CD4-positive, alpha-beta memory T cell (primary cell): ENCODE measurements at regions of chr6 and their contacts with region 1.

Region 1: GRCh38 chr6:111709615-111710398 is 104.1 kb upstream of the TRAF3IP2 start:
- DNase-seq: peak; percentile 74 to 79 (median 76)
- H3K4me3 ChIP-seq: no peak overlapping the region
- H3K4me3 Mint-ChIP-seq: peak overlapping the region; percentile 26 to 82 (median 44)
- H3K27ac ChIP-seq: peak overlapping the region; percentile 42
- H3K27ac Mint-ChIP-seq: peak overlapping the region; percentile 91 to 97 (median 95)
- H3K4me1 ChIP-seq: peaks cover 51% of the 10 kb centered on the region
- H3K4me1 Mint-ChIP-seq: peaks cover 40 to 60% (median 48%) of the 10 kb centered on the region in 4 donors
- H3K27me3 ChIP-seq: no peaks in the 10 kb centered on the region
- H3K27me3 Mint-ChIP-seq: no peaks in the 10 kb centered on the region

Region 2: GRCh38 chr6:111388681-111389080 is 321.1 kb before region 1 on chr6:
- CTCF ChIA-PET with region 1: no interaction called
- POLR2A ChIA-PET with region 1: no interaction called
- intact Hi-C with region 1: no loop called
- DNase-seq: no peak
- H3K4me3 ChIP-seq: no peak overlapping the region
- H3K4me3 Mint-ChIP-seq: no peak overlapping the region
- H3K27ac ChIP-seq: no peak overlapping the region
- H3K27ac Mint-ChIP-seq: peak overlapping the region in 2 of 7 donors; percentile 1 to 52
- H3K4me1 ChIP-seq: no peaks in the 10 kb centered on the region
- H3K4me1 Mint-ChIP-seq: no peaks in the 10 kb centered on the region
- H3K27me3 ChIP-seq: no peaks in the 10 kb centered on the region
- H3K27me3 Mint-ChIP-seq: no peaks in the 10 kb centered on the region

Region 3: GRCh38 chr6:111411978-111412566 is 297.7 kb before region 1 on chr6:
- CTCF ChIA-PET with region 1: no interaction called
- POLR2A ChIA-PET with region 1: no interaction called
- intact Hi-C with region 1: no loop called
- DNase-seq: no peak
- H3K4me3 ChIP-seq: no peak overlapping the region
- H3K4me3 Mint-ChIP-seq: no peak overlapping the region
- H3K27ac ChIP-seq: no peak overlapping the region
- H3K27ac Mint-ChIP-seq: no peak overlapping the region
- H3K4me1 ChIP-seq: no peaks in the 10 kb centered on the region
- H3K4me1 Mint-ChIP-seq: peaks cover 0 to 9% (median 5%) of the 10 kb centered on the region in 4 donors
- H3K27me3 ChIP-seq: no peaks in the 10 kb centered on the region
- H3K27me3 Mint-ChIP-seq: no peaks in the 10 kb centered on the region

Region 4: DNA sequence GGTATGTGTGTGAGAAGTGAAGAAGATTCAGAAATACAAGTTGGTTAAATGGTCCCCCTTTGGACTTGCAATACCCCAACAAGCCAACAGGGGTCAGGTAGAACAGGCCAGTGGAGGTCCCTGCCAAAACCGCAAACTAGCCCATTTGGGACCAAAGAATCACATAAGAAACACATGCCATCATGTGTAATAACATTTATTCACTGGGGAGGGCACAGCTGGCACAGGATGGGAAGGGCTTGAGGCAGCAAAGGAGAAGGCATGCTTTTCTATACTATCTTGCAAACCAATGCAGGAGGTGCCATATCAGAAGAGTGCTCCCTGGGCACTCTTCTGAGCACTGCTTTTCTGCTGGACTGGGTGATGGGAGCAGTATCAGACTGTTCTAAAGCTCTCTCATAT is 11.9 kb after region 1 on chr6:
- CTCF ChIA-PET with region 1: interaction called, 12 read pairs
- POLR2A ChIA-PET with region 1: interaction called, 3 read pairs
- intact Hi-C with region 1: loop called (anchors 2 kb)
- DNase-seq: peak; percentile 46 to 57 (median 50)
- H3K4me3 ChIP-seq: no peak overlapping the region
- H3K4me3 Mint-ChIP-seq: peak overlapping the region in 3 of 8 donors; percentile 17 to 81 (median 39)
- H3K27ac ChIP-seq: no peak overlapping the region
- H3K27ac Mint-ChIP-seq: peak overlapping the region; percentile 77 to 92 (median 88)
- H3K4me1 ChIP-seq: peaks cover 76% of the 10 kb centered on the region
- H3K4me1 Mint-ChIP-seq: peaks cover 61 to 84% (median 75%) of the 10 kb centered on the region in 4 donors
- H3K27me3 ChIP-seq: no peaks in the 10 kb centered on the region
- H3K27me3 Mint-ChIP-seq: no peaks in the 10 kb centered on the region

Region 5: DNA sequence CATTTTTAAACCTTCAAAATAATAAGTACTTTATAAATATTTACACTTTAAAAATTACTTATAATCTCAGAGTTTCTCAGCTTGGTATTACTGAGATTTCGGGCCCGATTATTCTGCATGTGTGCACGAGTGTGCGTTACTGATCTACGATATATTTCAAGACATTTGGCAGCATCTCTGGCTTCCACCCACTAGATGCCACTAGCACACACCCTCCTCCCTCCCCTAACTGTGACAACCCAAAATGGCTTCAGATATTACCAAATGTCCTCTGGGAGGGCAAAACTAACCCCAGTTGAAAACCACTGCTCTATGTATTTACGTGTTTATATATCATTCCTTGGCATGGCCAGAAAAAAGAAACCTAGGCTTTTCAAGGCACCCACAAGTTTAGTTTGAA is 67.5 kb after region 1 on chr6:
- CTCF ChIA-PET with region 1: interaction called, 11 read pairs
- POLR2A ChIA-PET with region 1: interaction called, 4 read pairs
- intact Hi-C with region 1: loop called (anchors 2 kb)
- DNase-seq: peak in 3 of 5 donors; percentile 46 to 50 (median 48)
- H3K4me3 ChIP-seq: no peak overlapping the region
- H3K4me3 Mint-ChIP-seq: peak overlapping the region; percentile 31 to 72 (median 62)
- H3K27ac ChIP-seq: peak overlapping the region; percentile 34
- H3K27ac Mint-ChIP-seq: peak overlapping the region in 6 of 7 donors; percentile 76 to 94 (median 90)
- H3K4me1 ChIP-seq: peaks cover 90% of the 10 kb centered on the region
- H3K4me1 Mint-ChIP-seq: peaks cover 67 to 93% (median 79%) of the 10 kb centered on the region in 4 donors
- H3K27me3 ChIP-seq: no peaks in the 10 kb centered on the region
- H3K27me3 Mint-ChIP-seq: no peaks in the 10 kb centered on the region

Region 6: GRCh38 chr6:111985202-111985731 is 275.5 kb after region 1 on chr6:
- CTCF ChIA-PET with region 1: interaction called, 20 read pairs
- POLR2A ChIA-PET with region 1: interaction called, 3 read pairs
- intact Hi-C with region 1: no loop called
- DNase-seq: peak in 4 of 5 donors; percentile 33 to 70 (median 43)
- H3K4me3 ChIP-seq: no peak overlapping the region
- H3K4me3 Mint-ChIP-seq: peak overlapping the region in 6 of 8 donors; percentile 7 to 74 (median 25)
- H3K27ac ChIP-seq: no peak overlapping the region
- H3K27ac Mint-ChIP-seq: peak overlapping the region; percentile 42 to 89 (median 70)
- H3K4me1 ChIP-seq: peaks cover 70% of the 10 kb centered on the region
- H3K4me1 Mint-ChIP-seq: peaks cover 47 to 85% (median 72%) of the 10 kb centered on the region in 4 donors
- H3K27me3 ChIP-seq: no peaks in the 10 kb centered on the region
- H3K27me3 Mint-ChIP-seq: no peaks in the 10 kb centered on the region

Region 7: GRCh38 chr6:112010328-112010727 is 300.5 kb after region 1 on chr6:
- CTCF ChIA-PET with region 1: interaction called, 27 read pairs
- POLR2A ChIA-PET with region 1: interaction called, 6 read pairs
- intact Hi-C with region 1: no loop called
- DNase-seq: peak in 4 of 5 donors; percentile 33 to 44 (median 38)
- H3K4me3 ChIP-seq: no peak overlapping the region
- H3K4me3 Mint-ChIP-seq: no peak overlapping the region
- H3K27ac ChIP-seq: no peak overlapping the region
- H3K27ac Mint-ChIP-seq: peak overlapping the region in 3 of 7 donors; percentile 0 to 77 (median 8)
- H3K4me1 ChIP-seq: peaks cover 4% of the 10 kb centered on the region
- H3K4me1 Mint-ChIP-seq: peaks cover 2 to 15% (median 5%) of the 10 kb centered on the region in 4 donors
- H3K27me3 ChIP-seq: no peaks in the 10 kb centered on the region
- H3K27me3 Mint-ChIP-seq: no peaks in the 10 kb centered on the region

Region 8: DNA sequence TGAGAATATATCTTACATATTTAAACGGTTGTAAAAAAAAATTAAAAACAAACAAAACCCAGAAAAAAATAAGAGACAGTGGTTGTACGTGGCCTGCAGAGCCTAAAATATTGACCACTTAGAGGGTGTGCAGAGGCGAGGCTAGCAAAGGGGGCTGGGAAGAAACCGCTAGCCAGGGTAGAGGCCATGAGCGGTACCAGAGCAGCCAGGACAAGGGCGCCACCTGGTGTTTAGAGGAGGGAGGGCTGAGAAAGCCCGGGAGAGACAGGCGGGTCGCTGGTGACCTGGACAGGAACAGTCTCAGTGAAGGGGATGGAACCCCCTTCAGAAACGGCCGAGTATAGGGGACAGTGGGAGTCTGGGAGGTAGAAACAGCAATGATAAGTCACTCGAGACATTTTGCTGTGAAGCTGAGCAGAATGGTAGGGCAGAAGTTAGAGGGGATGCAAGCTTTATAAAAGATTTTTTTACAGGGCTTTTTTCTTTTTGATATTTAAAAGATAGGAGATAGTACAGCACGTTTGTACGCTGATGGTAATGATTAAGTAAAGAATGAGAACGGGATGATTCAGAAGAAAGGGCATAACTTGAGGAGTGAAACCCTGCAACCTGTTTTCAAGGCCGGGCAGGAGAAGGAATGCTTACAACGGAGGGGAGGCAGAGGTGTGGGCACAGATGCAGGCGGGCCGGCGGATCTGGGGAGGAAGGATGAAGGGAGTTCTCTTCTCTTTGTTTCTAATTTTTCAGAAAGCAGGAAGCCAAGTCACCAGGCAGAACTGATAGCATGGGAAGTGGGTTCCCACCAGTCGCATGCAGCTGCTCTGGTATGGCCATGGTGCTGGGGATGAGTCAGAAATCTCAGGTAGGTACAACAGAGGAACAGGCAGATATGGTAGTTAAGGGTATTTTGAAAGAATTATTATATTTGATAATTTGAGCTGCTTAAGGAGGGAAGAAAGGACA is 453.8 kb after region 1 on chr6:
- CTCF ChIA-PET with region 1: interaction called, 3 read pairs
- POLR2A ChIA-PET with region 1: no interaction called
- intact Hi-C with region 1: loop called (anchors 10 kb)
- DNase-seq: peak; percentile 61 to 69 (median 63)
- H3K4me3 ChIP-seq: no peak overlapping the region
- H3K4me3 Mint-ChIP-seq: peak overlapping the region in 7 of 8 donors; percentile 48 to 86 (median 69)
- H3K27ac ChIP-seq: no peak overlapping the region
- H3K27ac Mint-ChIP-seq: peak overlapping the region in 4 of 7 donors; percentile 44 to 74 (median 63)
- H3K4me1 ChIP-seq: peaks cover 8% of the 10 kb centered on the region
- H3K4me1 Mint-ChIP-seq: peaks cover 4 to 17% (median 14%) of the 10 kb centered on the region in 4 donors
- H3K27me3 ChIP-seq: no peaks in the 10 kb centered on the region
- H3K27me3 Mint-ChIP-seq: peaks cover 41 to 43% of the 10 kb centered on the region in 2 donors

Region 9: DNA sequence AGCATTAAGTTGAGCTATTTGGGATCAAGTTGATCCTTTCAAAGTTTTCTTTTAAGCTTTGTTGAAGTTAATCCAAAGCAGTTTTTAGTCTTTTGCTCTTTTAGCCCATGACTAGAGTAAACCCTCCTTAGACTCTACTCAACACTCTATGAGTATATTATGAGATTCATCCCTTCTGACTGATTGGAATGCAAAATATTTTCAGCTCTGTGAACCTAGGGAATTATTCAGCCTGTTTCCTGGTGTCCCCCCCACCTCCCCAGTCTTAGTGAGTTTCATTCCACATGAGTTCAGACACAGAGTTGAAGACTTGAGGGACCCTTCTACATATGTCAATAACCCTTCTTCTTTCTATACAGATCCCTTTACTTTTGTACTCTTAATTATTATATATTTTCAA is 1051.0 kb after region 1 on chr6:
- CTCF ChIA-PET with region 1: no interaction called
- POLR2A ChIA-PET with region 1: no interaction called
- intact Hi-C with region 1: no loop called
- DNase-seq: no peak
- H3K4me3 ChIP-seq: no peak overlapping the region
- H3K4me3 Mint-ChIP-seq: no peak overlapping the region
- H3K27ac ChIP-seq: no peak overlapping the region
- H3K27ac Mint-ChIP-seq: no peak overlapping the region
- H3K4me1 ChIP-seq: no peaks in the 10 kb centered on the region
- H3K4me1 Mint-ChIP-seq: no peaks in the 10 kb centered on the region
- H3K27me3 ChIP-seq: no peaks in the 10 kb centered on the region
- H3K27me3 Mint-ChIP-seq: no peaks in the 10 kb centered on the region